Right ventricle myocardium superior (tissue), 1 donor: ENCODE measurements at regions of chr9 and their contacts with region 1.

Region 1: GRCh38 chr9:5186416-5187169 is 1.2 kb upstream of the INSL6 start:
- DNase-seq: no peak
- ATAC-seq: peak; percentile 87

Region 2: DNA sequence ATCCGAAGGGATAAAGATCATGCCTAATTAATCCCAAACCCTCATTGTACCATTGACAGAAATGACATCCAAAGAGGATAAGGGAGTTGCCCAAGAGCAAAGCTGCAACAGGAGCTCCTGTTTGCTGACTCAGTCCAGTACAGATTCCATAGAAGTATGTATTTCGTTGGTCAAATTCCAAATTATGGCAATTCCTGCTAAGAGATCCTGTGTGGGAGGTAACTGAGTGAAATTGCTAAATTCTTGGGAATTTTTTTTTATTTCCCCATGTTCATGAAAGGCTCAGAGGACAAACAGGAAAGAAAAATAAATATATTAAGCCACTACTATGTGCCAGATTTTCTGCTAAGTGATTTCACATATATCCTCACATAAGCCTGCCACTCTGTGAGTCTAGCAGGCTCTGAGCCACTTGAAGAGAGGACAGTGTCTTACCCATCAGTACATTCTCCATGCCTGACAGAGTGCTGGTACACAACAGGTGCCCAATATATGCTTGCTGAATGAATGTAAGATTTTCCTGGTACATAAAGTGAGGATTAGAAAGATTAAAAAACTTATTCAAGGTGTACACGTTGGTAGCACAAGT is 1019.4 kb before region 1 on chr9:
- intact Hi-C with region 1: no loop called
- DNase-seq: no peak
- ATAC-seq: no peak

Region 3: GRCh38 chr9:5442400-5443011 is 255.9 kb after region 1 on chr9:
- intact Hi-C with region 1: loop called (anchors 5 kb)
- DNase-seq: no peak
- ATAC-seq: no peak

Region 4: GRCh38 chr9:5608298-5609225 is 422.0 kb after region 1 on chr9:
- intact Hi-C with region 1: loop called (anchors 5 kb)
- DNase-seq: no peak
- ATAC-seq: peak; percentile 90